A549 (cell line): ENCODE measurements at regions of chr3 and their contacts with region 1.

Region 1: GRCh38 chr3:160163229-160163878 is 61.9 kb upstream of the C3orf80 start:
- DNase-seq: peak; percentile 26 to 36
- ATAC-seq: peak; percentile 54 to 83; a peak in 3 of 6 replicates
- H3K4me3 ChIP-seq: no peak overlapping the region
- H3K27ac ChIP-seq: peak overlapping the region; percentile 28 to 58; a peak in 3 of 6 replicates
- H3K4me1 ChIP-seq: peaks cover 4% of the 10 kb centered on the region
- CTCF ChIP-seq: peak; percentile 73
- EP300 ChIP-seq: no peak
- POLR2A ChIP-seq: no peak
- RAD21 ChIP-seq: peak; percentile 76 to 84

Region 2: GRCh38 chr3:160150525-160150924 is 12.8 kb before region 1 on chr3:
- CTCF ChIA-PET with region 1: interaction called, 12 read pairs
- POLR2A ChIA-PET with region 1: no interaction called
- DNase-seq: no peak
- ATAC-seq: no peak
- H3K4me3 ChIP-seq: no peak overlapping the region
- H3K27ac ChIP-seq: peak overlapping the region in 1 of 2 experiments; percentile 43; a peak in 2 of 6 replicates
- H3K4me1 ChIP-seq: no peaks in the 10 kb centered on the region
- CTCF ChIP-seq: no peak
- EP300 ChIP-seq: no peak
- POLR2A ChIP-seq: no peak
- RAD21 ChIP-seq: no peak

Region 3: GRCh38 chr3:160185751-160186150 is 22.4 kb after region 1 on chr3:
- CTCF ChIA-PET with region 1: interaction called, 10 read pairs
- POLR2A ChIA-PET with region 1: no interaction called
- DNase-seq: no peak
- ATAC-seq: no peak
- H3K4me3 ChIP-seq: no peak overlapping the region
- H3K27ac ChIP-seq: no peak overlapping the region
- H3K4me1 ChIP-seq: 0 out of 3 replicates have a peak, but pooled peaks cover 6% of the 10 kb centered on the region
- CTCF ChIP-seq: no peak
- EP300 ChIP-seq: no peak
- POLR2A ChIP-seq: no peak
- RAD21 ChIP-seq: no peak

Region 4: DNA sequence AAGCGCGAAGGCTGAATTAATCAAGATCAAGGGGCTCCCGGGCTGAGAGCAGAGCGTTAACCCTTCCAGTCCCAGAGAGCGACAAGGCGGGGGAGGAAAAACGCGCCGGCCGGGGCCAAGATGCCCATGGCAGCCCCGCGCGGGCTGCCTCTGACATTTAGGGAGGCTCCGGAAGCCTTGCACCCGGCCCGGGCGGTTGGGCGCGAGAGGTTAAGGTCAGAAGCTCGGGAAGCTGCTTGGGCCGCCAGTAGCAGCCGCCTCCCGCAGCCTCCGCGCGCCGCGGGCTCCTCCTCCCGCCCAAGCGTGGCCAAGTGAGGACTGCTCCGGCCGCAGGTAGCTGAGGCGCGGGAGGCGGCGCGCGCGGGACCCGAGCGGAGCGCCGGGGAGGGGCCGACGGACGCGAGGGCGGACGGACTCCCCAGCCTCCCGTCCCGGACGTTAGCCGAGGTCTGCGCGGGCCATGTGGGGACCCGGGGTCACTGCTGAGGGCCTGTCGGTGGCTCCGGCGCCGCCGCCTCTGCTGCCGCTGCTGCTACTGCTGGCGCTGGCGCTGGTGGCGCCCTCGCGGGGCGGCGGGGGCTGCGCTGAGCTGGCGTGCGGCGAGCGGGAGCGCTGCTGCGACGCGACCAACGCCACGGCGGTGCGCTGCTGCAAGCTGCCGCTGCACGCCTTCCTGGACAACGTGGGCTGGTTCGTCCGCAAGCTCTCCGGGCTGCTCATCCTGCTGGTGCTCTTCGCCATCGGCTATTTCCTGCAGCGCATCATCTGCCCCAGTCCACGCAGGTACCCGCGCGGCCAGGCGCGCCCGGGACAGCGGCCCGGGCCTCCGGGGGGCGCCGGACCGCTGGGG is 62.0 kb after region 1 on chr3 and contains the start of gene C3orf80:
- CTCF ChIA-PET with region 1: interaction called, 26 read pairs
- POLR2A ChIA-PET with region 1: interaction called, 3 read pairs
- DNase-seq: peak; percentile 49 to 66
- ATAC-seq: peak; percentile 93
- H3K4me3 ChIP-seq: peak within 1 kb of the TSS; percentile 57
- H3K27ac ChIP-seq: peak within 1 kb of the TSS; percentile 74 to 89
- H3K4me1 ChIP-seq: no peaks in the 10 kb centered on the region
- CTCF ChIP-seq: peak; percentile 58
- EP300 ChIP-seq: no peak
- POLR2A ChIP-seq: peak; percentile 44
- RAD21 ChIP-seq: peak in 1 of 2 experiments; percentile 56; a peak in 3 of 5 replicates
- polyA plus RNA-seq, gene C3orf80: 1.7 TPM in 2 replicates

Region 5: GRCh38 chr3:160413613-160414248 is 250.4 kb after region 1 on chr3:
- CTCF ChIA-PET with region 1: interaction called, 12 read pairs
- POLR2A ChIA-PET with region 1: interaction called, 4 read pairs
- DNase-seq: peak; percentile 55 to 79
- ATAC-seq: peak; percentile 82 to 88
- H3K4me3 ChIP-seq: no peak overlapping the region
- H3K27ac ChIP-seq: no peak overlapping the region
- H3K4me1 ChIP-seq: peaks cover 16% of the 10 kb centered on the region; the same call in 2 of the 3 replicates
- CTCF ChIP-seq: peak; percentile 90
- EP300 ChIP-seq: no peak
- POLR2A ChIP-seq: no peak
- RAD21 ChIP-seq: peak; percentile 78 to 85